CD8-positive, alpha-beta T cell (primary cell): ENCODE measurements at regions of chr18 and their contacts with region 1.

Region 1: DNA sequence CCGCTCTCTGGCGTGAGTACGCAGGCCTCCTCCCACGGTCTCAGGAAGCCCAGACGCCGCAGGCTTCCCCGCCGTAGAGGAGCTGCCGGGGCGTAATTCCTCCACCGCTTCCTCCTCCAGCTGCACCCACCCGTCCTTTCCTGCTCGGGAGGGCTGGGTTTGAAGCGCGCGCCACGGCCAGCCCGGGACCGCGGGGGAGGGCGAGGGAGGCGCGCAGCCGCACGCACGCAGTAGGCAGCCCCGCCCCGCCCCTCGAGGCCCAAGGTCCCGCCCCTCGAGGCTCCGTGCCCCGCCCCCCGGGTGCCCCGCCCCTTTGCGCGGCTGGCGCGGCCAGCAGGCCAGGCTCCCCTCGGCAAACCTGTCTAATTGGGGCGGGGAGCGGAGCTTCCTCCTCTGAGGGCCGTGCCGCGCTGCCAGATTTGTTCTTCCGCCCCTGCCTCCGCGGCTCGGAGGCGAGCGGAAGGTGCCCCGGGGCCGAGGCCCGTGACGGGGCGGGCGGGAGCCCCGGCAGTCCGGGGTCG is at the start of gene MALT1:
- DNase-seq: peak; percentile 91 to 99 (median 95)
- ATAC-seq: peak; percentile 90
- H3K4me3 ChIP-seq: peak within 1 kb of the TSS; percentile 81 to 83
- H3K4me3 Mint-ChIP-seq: peak within 1 kb of the TSS; percentile 96
- H3K27ac ChIP-seq: peak within 1 kb of the TSS; percentile 67 to 84
- H3K27ac Mint-ChIP-seq: peak within 1 kb of the TSS; percentile 95
- H3K4me1 ChIP-seq: peaks cover 46% of the 10 kb centered on the region
- H3K4me1 Mint-ChIP-seq: peaks cover 48% of the 10 kb centered on the region
- H3K27me3 ChIP-seq: no peaks in the 10 kb centered on the region
- H3K27me3 Mint-ChIP-seq: no peaks in the 10 kb centered on the region
- CTCF ChIP-seq: no peak
- total RNA-seq, gene MALT1: 67.9 to 69.9 TPM

Region 2: DNA sequence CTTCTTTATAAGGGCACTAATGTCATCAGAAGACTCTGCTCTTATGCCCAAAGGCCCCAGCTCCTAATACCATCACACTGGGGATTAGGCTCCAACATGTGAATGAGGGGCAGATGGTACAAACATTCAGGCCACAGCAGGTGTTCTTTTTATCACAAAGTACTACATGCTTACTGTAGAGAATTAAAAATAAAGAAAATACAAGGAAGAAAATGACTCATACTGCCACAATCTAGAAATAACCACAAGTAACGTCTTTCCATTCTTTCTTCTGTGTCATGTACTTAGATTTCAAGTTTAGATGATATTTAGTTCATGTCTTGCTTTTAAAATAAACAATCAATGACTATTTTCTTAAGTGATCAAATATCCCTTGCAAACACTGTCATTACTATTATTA is 727.4 kb before region 1 on chr18:
- CTCF ChIA-PET with region 1: no interaction called
- POLR2A ChIA-PET with region 1: no interaction called
- intact Hi-C with region 1: no loop called
- DNase-seq: no peak
- ATAC-seq: no peak
- H3K4me3 ChIP-seq: no peak overlapping the region
- H3K4me3 Mint-ChIP-seq: no peak overlapping the region
- H3K27ac ChIP-seq: no peak overlapping the region
- H3K27ac Mint-ChIP-seq: no peak overlapping the region
- H3K4me1 ChIP-seq: no peaks in the 10 kb centered on the region
- H3K4me1 Mint-ChIP-seq: no peaks in the 10 kb centered on the region
- H3K27me3 ChIP-seq: no peaks in the 10 kb centered on the region
- H3K27me3 Mint-ChIP-seq: peaks cover 11% of the 10 kb centered on the region
- CTCF ChIP-seq: no peak

Region 3: GRCh38 chr18:58541789-58542425 is 129.3 kb before region 1 on chr18:
- CTCF ChIA-PET with region 1: no interaction called
- POLR2A ChIA-PET with region 1: interaction called, 6 read pairs
- intact Hi-C with region 1: loop called in 1 of 2 experiments (anchors 5 kb)
- DNase-seq: peak in 6 of 9 experiments; percentile 6 to 79 (median 47)
- ATAC-seq: peak; percentile 82
- H3K4me3 ChIP-seq: no peak overlapping the region
- H3K4me3 Mint-ChIP-seq: no peak overlapping the region
- H3K27ac ChIP-seq: no peak overlapping the region
- H3K27ac Mint-ChIP-seq: no peak overlapping the region
- H3K4me1 ChIP-seq: no peaks in the 10 kb centered on the region
- H3K4me1 Mint-ChIP-seq: peaks cover 20% of the 10 kb centered on the region
- H3K27me3 ChIP-seq: no peaks in the 10 kb centered on the region
- H3K27me3 Mint-ChIP-seq: no peaks in the 10 kb centered on the region
- CTCF ChIP-seq: no peak

Region 4: GRCh38 chr18:58682429-58683069 is 11.4 kb after region 1 on chr18:
- CTCF ChIA-PET with region 1: interaction called, 8 read pairs
- POLR2A ChIA-PET with region 1: interaction called, 89 read pairs
- intact Hi-C with region 1: loop called (anchors 1 to 2 kb)
- DNase-seq: no peak
- ATAC-seq: no peak
- H3K4me3 ChIP-seq: no peak overlapping the region
- H3K4me3 Mint-ChIP-seq: no peak overlapping the region
- H3K27ac ChIP-seq: no peak overlapping the region
- H3K27ac Mint-ChIP-seq: peak overlapping the region; percentile 41
- H3K4me1 ChIP-seq: peaks cover 14% of the 10 kb centered on the region
- H3K4me1 Mint-ChIP-seq: peaks cover 64% of the 10 kb centered on the region
- H3K27me3 ChIP-seq: no peaks in the 10 kb centered on the region
- H3K27me3 Mint-ChIP-seq: no peaks in the 10 kb centered on the region
- CTCF ChIP-seq: no peak

Region 5: DNA sequence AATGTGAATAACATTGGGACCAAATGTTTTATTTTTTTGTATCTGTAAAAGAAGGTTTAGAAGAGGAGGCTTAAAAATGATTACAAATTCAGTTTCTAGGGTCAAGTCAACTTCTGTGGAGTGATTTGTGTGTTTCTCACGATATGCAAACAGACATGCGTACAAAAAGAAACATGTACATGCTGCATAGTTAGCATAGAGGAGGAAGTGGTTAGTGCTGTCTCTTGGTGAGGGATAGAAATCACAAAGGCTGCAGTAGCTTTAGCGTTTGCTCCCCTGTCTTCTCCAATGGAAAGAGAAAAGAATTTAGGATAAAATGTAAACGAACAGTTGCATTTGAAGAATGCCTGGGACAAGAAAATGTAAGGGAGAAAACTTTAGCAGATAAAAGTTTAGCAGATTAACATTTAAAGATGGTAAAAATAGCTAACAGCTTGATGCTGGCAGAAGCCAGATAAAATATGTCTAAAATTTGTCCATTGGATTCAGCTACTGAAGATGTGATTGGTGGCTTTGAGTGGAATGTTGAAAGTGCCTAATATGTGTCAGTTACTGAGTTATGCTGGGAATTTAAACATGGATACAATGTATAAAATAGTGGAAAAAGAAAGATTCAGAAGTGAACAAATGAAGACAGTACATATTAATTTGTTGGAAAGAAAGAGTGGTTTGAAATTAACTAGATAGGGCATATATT is 45.0 kb after region 1 on chr18:
- CTCF ChIA-PET with region 1: interaction called, 3 read pairs
- POLR2A ChIA-PET with region 1: interaction called, 10 read pairs
- intact Hi-C with region 1: loop called (anchors 1 to 5 kb)
- DNase-seq: peak in 2 of 9 experiments; percentile 44 to 71
- ATAC-seq: peak; percentile 80
- H3K4me3 ChIP-seq: peak overlapping the region in 1 of 2 experiments; percentile 5
- H3K4me3 Mint-ChIP-seq: peak overlapping the region; percentile 73
- H3K27ac ChIP-seq: peak overlapping the region; percentile 7 to 23
- H3K27ac Mint-ChIP-seq: peak overlapping the region; percentile 93
- H3K4me1 ChIP-seq: peaks cover 38% of the 10 kb centered on the region
- H3K4me1 Mint-ChIP-seq: peaks cover 64% of the 10 kb centered on the region
- H3K27me3 ChIP-seq: no peaks in the 10 kb centered on the region
- H3K27me3 Mint-ChIP-seq: no peaks in the 10 kb centered on the region
- CTCF ChIP-seq: no peak

Region 6: DNA sequence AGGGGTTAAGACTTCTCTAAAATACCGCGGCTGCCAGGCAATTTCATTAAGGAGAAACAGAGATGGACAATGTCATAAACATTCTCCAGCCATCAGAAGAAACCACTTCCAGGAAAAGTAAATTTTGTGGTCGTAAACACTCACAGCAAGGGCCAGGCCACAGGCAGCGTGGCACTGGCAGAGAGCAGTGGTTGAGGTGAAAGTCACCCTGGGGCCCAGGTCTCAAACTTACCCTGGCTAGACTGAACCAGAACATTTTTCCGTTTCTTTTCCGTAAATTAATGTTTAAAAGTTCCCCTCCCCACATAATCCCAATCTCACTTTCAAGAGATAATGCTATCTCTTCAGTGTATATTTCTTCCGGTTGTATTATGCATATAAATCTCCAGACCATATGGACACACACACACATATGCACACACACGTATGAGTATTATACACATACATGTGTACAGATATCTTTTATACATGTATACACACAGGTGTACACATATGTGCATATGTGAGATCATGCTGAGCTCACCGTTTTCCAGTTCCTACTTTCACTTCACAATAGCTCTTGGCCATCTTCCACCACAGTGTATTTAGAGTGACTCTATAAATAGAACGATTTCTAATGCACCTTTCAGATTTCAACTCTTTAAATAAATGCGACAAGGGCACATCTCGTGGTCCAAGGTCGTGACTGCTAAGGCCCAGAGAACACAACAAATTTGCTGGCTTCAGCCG is 90.2 kb after region 1 on chr18:
- CTCF ChIA-PET with region 1: interaction called, 22 read pairs
- POLR2A ChIA-PET with region 1: interaction called, 12 read pairs
- intact Hi-C with region 1: loop called (anchors 1 to 5 kb)
- DNase-seq: no peak
- ATAC-seq: no peak
- H3K4me3 ChIP-seq: no peak overlapping the region
- H3K4me3 Mint-ChIP-seq: no peak overlapping the region
- H3K27ac ChIP-seq: no peak overlapping the region
- H3K27ac Mint-ChIP-seq: no peak overlapping the region
- H3K4me1 ChIP-seq: peaks cover 7% of the 10 kb centered on the region
- H3K4me1 Mint-ChIP-seq: peaks cover 39% of the 10 kb centered on the region
- H3K27me3 ChIP-seq: no peaks in the 10 kb centered on the region
- H3K27me3 Mint-ChIP-seq: peaks cover 16% of the 10 kb centered on the region
- CTCF ChIP-seq: no peak

Region 7: GRCh38 chr18:59358712-59359575 is 687.8 kb after region 1 on chr18 and contains the start of gene LMAN1:
- CTCF ChIA-PET with region 1: no interaction called
- POLR2A ChIA-PET with region 1: no interaction called
- intact Hi-C with region 1: loop called (anchors 5 to 10 kb)
- DNase-seq: peak; percentile 77 to 96 (median 92)
- ATAC-seq: peak; percentile 92
- H3K4me3 ChIP-seq: peak within 1 kb of the TSS; percentile 67 to 97
- H3K4me3 Mint-ChIP-seq: peak within 1 kb of the TSS; percentile 97
- H3K27ac ChIP-seq: peak within 1 kb of the TSS; percentile 51 to 86
- H3K27ac Mint-ChIP-seq: peak within 1 kb of the TSS; percentile 92
- H3K4me1 ChIP-seq: peaks cover 21% of the 10 kb centered on the region
- H3K4me1 Mint-ChIP-seq: peaks cover 39% of the 10 kb centered on the region
- H3K27me3 ChIP-seq: no peaks in the 10 kb centered on the region
- H3K27me3 Mint-ChIP-seq: no peaks in the 10 kb centered on the region
- CTCF ChIP-seq: no peak
- total RNA-seq, gene LMAN1: 39.6 to 44.6 TPM